ENCODE measurements at regions of chr15 and their contacts with region 1.

Region 1: GRCh38 chr15:42137431-42138261 is 18.8 kb downstream of the PLA2G4F start:
- DNase-seq: no peak
- H3K4me3 ChIP-seq: no peak overlapping the region
- H3K27ac ChIP-seq: no peak overlapping the region
- H3K4me1 ChIP-seq: 0 out of 2 replicates have a peak, but pooled peaks cover under 1% of the 10 kb centered on the region
- H3K27me3 ChIP-seq: no peaks in the 10 kb centered on the region
- CTCF ChIP-seq: peak; percentile 70

Region 2: GRCh38 chr15:41849861-41850260 is 287.8 kb before region 1 on chr15:
- CTCF ChIA-PET with region 1: no interaction called
- POLR2A ChIA-PET with region 1: no interaction called
- intact Hi-C with region 1: no loop called
- DNase-seq: no peak
- H3K4me3 ChIP-seq: no peak overlapping the region
- H3K27ac ChIP-seq: no peak overlapping the region
- H3K4me1 ChIP-seq: no peaks in the 10 kb centered on the region
- H3K27me3 ChIP-seq: no peaks in the 10 kb centered on the region
- CTCF ChIP-seq: no peak

Region 3: GRCh38 chr15:41989259-41989933 is 148.2 kb before region 1 on chr15:
- CTCF ChIA-PET with region 1: interaction called, 4 read pairs
- POLR2A ChIA-PET with region 1: no interaction called
- intact Hi-C with region 1: loop called (anchors 1 kb)
- DNase-seq: peak; percentile 43 to 85
- H3K4me3 ChIP-seq: no peak overlapping the region
- H3K27ac ChIP-seq: no peak overlapping the region
- H3K4me1 ChIP-seq: no peaks in the 10 kb centered on the region
- H3K27me3 ChIP-seq: no peaks in the 10 kb centered on the region
- CTCF ChIP-seq: peak; percentile 88

Region 4: DNA sequence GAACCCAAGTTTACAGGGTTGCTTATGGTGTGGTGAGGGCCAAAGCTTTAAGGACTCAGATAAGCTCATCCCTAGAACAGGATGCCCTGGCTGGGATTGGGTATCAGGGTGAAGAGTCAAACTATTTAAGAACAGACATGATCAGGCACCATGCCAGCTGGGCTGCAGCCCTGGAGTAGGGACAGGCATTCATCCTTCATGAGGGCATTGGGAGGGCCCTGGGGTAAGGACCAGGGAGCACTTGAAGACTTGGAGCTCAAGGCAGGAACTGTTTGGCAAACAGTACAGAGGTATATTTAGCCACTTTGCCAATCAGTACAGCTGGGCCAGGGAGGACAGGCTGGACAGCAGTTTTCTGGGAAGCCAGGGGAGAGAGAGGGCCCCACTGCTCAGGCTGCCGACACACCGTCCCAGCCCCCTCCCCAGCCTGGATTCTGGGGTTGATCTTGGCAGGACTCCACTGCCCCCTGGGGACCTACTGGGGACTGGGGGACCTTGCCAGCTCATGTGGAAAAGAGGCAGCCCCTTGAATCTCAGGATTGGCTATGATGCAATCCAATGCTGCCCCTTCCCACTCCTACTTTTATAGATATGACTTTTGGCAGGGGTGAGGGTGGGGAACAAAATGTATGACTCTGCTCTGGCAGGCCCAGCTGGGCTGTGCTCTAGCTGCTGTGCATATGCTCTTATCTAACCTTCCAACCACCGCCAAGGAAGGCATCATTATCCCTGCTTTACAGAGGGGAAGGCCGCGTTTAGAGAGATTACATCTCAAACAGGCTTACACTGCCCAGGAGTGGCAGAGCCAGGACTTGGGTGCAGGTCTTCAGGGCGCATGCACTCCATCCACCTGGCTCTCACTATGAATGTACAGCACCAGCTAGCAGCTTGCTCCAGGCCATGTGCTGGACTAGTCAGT is 119.1 kb before region 1 on chr15:
- CTCF ChIA-PET with region 1: no interaction called
- POLR2A ChIA-PET with region 1: no interaction called
- intact Hi-C with region 1: no loop called
- DNase-seq: no peak
- H3K4me3 ChIP-seq: no peak overlapping the region
- H3K27ac ChIP-seq: no peak overlapping the region
- H3K4me1 ChIP-seq: no peaks in the 10 kb centered on the region
- H3K27me3 ChIP-seq: no peaks in the 10 kb centered on the region
- CTCF ChIP-seq: no peak

Region 5: DNA sequence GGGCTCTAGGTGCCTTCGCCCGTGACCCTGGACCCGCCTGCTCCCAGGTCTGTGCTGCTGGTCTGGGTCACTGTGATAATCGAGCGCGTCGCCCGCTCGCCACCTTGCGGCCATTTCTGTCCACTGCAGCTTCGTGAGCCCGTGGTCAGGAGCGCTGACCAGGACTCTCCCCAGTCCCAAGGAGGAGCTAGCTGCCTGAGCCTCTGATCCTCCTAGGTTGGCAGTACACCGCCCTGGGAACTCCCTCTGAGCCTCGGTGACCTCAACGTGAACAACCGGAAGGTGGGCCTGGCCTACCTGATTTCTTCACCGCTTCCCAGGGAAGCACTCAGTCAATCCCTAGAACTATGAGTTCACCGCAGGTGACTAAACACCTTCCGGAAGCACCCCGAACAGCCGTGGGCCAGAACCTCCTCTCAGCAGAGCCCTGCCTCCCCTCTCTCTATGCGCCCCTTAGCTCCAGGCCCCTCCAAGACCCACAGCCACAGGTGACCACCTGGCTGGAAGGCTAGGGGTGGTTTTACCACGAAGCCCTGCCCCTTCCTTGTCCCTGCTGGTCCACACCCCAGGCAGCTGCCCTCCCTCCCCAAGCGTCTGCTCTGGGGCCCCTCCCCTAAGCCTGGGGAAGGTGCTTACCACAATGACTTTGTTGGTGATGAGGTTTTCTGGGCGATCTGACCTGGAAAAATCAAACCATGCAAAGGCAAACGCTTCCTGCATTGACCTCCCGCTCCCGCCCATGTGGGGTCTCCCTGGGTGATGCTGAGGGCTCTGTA is 53.0 kb before region 1 on chr15:
- CTCF ChIA-PET with region 1: interaction called, 5 read pairs
- POLR2A ChIA-PET with region 1: no interaction called
- intact Hi-C with region 1: loop called (anchors 5 kb)
- DNase-seq: peak; percentile 86 to 91
- H3K4me3 ChIP-seq: peak overlapping the region; percentile 50; the same call in 1 of the 2 replicates
- H3K27ac ChIP-seq: peak overlapping the region; percentile 93
- H3K4me1 ChIP-seq: peaks cover 29% of the 10 kb centered on the region
- H3K27me3 ChIP-seq: no peaks in the 10 kb centered on the region
- CTCF ChIP-seq: peak; percentile 90

Region 6: GRCh38 chr15:42650208-42651066 is 512.8 kb after region 1 on chr15:
- CTCF ChIA-PET with region 1: no interaction called
- POLR2A ChIA-PET with region 1: no interaction called
- intact Hi-C with region 1: loop called (anchors 10 kb)
- DNase-seq: peak in 1 of 2 experiments; percentile 52
- H3K4me3 ChIP-seq: no peak overlapping the region
- H3K27ac ChIP-seq: no peak overlapping the region
- H3K4me1 ChIP-seq: no peaks in the 10 kb centered on the region
- H3K27me3 ChIP-seq: no peaks in the 10 kb centered on the region
- CTCF ChIP-seq: peak; percentile 74